ENCODE measurements at regions of chr1 and their contacts with region 1.

Region 1: GRCh38 chr1:76154206-76154956 is 79.8 kb downstream of the ST6GALNAC3 start:
- DNase-seq: peak; percentile 87
- ATAC-seq: peak; percentile 95
- H3K4me3 Mint-ChIP-seq: peak overlapping the region; percentile 77
- H3K27ac Mint-ChIP-seq: peak overlapping the region; percentile 91
- H3K4me1 Mint-ChIP-seq: peaks cover 12% of the 10 kb centered on the region
- H3K27me3 Mint-ChIP-seq: no peaks in the 10 kb centered on the region

Region 2: GRCh38 chr1:76006234-76006633 is 148.1 kb before region 1 on chr1:
- CTCF ChIA-PET with region 1: no interaction called
- POLR2A ChIA-PET with region 1: no interaction called
- DNase-seq: no peak
- ATAC-seq: no peak
- H3K4me3 Mint-ChIP-seq: no peak overlapping the region
- H3K27ac Mint-ChIP-seq: no peak overlapping the region
- H3K4me1 Mint-ChIP-seq: no peaks in the 10 kb centered on the region
- H3K27me3 Mint-ChIP-seq: no peaks in the 10 kb centered on the region

Region 3: GRCh38 chr1:76142771-76143540 is 11.4 kb before region 1 on chr1:
- CTCF ChIA-PET with region 1: interaction called, 21 read pairs
- POLR2A ChIA-PET with region 1: interaction called, 4 read pairs
- DNase-seq: no peak
- ATAC-seq: no peak
- H3K4me3 Mint-ChIP-seq: no peak overlapping the region
- H3K27ac Mint-ChIP-seq: no peak overlapping the region
- H3K4me1 Mint-ChIP-seq: no peaks in the 10 kb centered on the region
- H3K27me3 Mint-ChIP-seq: peaks cover 2% of the 10 kb centered on the region

Region 4: DNA sequence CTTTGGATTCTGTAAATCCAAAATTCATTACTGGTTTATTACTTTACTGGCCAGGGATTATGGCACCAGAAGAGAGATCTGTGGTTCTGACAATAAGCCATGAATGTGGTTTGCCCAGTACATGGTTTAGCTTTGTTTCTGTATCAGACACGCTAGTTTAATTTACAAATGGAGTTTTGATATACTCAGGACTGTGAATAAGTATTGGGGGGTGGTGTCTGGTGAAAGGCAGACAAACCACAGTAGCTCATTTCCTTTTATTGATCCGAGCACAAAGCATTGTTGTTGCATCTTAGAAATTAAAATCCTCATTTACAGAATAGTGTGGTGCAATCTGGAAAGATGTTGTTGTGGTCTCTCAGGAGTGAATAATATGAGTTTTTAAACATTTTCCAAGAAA is 16.1 kb after region 1 on chr1:
- CTCF ChIA-PET with region 1: interaction called, 10 read pairs
- POLR2A ChIA-PET with region 1: no interaction called
- DNase-seq: no peak
- ATAC-seq: no peak
- H3K4me3 Mint-ChIP-seq: no peak overlapping the region
- H3K27ac Mint-ChIP-seq: peak overlapping the region; percentile 32
- H3K4me1 Mint-ChIP-seq: peaks cover 9% of the 10 kb centered on the region
- H3K27me3 Mint-ChIP-seq: no peaks in the 10 kb centered on the region

Region 5: DNA sequence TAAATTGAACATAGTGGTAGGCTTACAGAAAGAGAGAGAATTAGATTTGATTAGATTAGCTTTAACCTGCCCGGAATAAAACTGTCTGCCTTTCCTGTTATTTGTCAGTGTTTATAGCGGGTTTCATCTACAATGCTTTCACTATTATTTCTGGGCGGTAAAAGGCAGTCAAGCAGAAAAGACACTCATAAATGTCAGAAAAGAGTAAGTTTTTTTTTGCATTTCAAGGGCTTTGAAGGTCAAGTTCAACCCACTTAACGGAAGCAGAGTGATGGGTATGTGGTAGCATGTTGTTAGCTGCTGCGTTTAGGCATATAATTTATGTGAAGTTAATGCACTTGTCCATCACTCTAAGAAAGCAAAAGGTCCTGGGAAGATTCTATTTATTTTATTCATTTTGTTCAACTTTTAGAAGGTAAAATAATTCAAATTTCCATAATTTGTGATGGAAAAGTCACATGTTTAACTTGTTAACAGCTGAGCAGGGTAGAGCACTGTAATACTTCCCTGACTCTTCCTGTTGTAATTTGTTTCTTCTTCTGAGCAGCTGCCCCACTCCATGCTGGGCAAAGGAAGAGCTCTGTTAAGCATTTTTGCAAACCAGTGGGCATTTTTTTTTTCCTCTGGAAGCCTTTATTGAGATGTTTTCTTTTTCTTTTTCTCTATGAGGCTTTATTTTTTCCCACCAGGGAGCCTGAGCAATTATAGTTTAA is 140.3 kb after region 1 on chr1:
- CTCF ChIA-PET with region 1: interaction called, 21 read pairs
- POLR2A ChIA-PET with region 1: no interaction called
- DNase-seq: no peak
- ATAC-seq: peak; percentile 49
- H3K4me3 Mint-ChIP-seq: peak overlapping the region; percentile 50
- H3K27ac Mint-ChIP-seq: peak overlapping the region; percentile 77
- H3K4me1 Mint-ChIP-seq: peaks cover 28% of the 10 kb centered on the region
- H3K27me3 Mint-ChIP-seq: no peaks in the 10 kb centered on the region

Region 6: DNA sequence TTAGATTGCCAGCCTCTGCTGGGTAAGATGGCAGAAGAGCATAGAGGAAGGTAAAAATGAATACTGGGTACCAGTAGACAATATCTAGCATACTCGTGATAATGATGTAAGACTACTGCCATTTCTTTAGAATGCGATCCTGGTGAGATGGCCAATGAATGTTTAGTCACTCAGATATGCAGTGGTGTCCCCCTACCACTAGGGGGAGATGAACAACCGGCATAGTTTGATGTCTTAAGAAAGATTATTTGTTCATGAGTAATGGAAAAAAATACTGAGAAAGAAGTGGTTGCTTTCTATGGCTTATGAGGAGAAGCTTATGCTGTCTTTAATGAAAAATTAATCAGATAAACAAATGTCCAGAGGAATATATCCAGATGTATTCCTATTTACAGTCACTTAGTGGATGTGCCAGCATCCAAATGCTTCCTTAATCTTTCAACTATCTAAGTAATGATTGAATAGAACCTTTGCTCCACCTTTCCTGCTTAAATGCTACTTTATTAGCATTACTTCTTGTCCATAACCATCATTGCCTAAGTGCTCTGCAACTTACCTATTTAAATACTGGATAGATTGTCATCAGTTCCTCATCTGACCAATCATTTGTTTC is 176.7 kb after region 1 on chr1:
- CTCF ChIA-PET with region 1: interaction called, 17 read pairs
- POLR2A ChIA-PET with region 1: no interaction called
- DNase-seq: peak; percentile 49
- ATAC-seq: peak; percentile 67
- H3K4me3 Mint-ChIP-seq: no peak overlapping the region
- H3K27ac Mint-ChIP-seq: no peak overlapping the region
- H3K4me1 Mint-ChIP-seq: peaks cover 2% of the 10 kb centered on the region
- H3K27me3 Mint-ChIP-seq: no peaks in the 10 kb centered on the region

Region 7: DNA sequence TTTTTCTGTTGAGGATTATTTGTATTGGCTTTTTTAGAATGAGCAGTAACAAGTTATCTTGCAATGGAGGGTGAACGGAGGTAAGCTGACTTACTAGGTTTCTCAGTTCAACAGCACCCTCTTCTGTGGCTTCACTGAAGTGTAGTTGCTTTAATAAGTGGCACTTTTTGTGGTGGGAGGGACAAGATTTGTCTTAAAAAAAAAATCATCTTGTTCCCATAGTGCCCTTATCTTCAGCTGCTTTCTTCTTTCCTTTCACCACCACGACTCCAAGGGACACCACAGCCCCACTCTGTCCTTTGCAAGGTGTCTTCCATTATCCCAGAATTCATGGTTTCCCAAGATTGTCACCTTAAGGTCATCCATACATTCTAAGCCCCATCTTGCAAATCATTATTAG is 971.9 kb after region 1 on chr1:
- CTCF ChIA-PET with region 1: interaction called, 12 read pairs
- POLR2A ChIA-PET with region 1: no interaction called
- DNase-seq: peak; percentile 44
- ATAC-seq: no peak
- H3K4me3 Mint-ChIP-seq: no peak overlapping the region
- H3K27ac Mint-ChIP-seq: no peak overlapping the region
- H3K4me1 Mint-ChIP-seq: no peaks in the 10 kb centered on the region
- H3K27me3 Mint-ChIP-seq: no peaks in the 10 kb centered on the region

Measured in activated CD8-positive, alpha-beta T cell treated with anti-CD3 and anti-CD28 coated beads, Interleukin-2, amount 10 ng/mL, durations not matched to agents 7 days and 5 days (primary cell).